ENCODE measurements at regions of chr7 and their contacts with region 1.

Region 1: DNA sequence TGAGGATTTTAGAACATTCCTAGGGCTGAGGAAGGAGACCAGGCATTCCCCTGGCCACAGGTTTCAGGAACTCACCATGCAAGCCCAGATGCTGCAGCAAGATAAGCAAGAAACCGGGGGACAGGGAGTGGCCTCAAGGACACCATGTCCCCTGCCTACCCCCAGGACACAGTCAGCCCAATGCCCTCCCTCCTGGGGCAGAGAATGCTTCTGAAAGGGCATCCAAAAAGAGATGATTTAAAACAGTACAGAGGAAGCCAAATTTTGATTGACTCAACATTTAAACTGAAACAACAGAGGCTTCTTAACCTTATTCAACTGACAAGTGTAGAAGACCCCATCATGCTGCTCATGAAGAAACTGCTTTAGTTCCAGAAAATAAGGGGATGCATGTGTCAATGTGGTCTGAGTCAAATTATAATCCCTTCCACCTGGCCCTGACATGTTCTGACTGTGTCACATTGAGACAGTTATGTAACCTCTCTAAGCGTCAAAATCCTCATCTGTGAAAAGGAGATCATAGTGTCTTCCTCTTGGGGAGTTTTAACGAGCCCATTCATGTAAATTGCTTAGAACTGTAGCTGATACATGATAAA is 60.0 kb downstream of the ICA1 start:
- DNase-seq: peak; percentile 32
- H3K4me3 ChIP-seq: no peak overlapping the region
- H3K27ac ChIP-seq: no peak overlapping the region
- H3K4me1 ChIP-seq: peaks cover 10% of the 10 kb centered on the region
- H3K27me3 ChIP-seq: no peaks in the 10 kb centered on the region
- CTCF ChIP-seq: no peak

Region 2: GRCh38 chr7:7554021-7554432 is 647.9 kb before region 1 on chr7:
- CTCF ChIA-PET with region 1: no interaction called
- dilution Hi-C with region 1: no loop called
- in situ Hi-C with region 1: no loop called
- intact Hi-C with region 1: no loop called
- DNase-seq: peak; percentile 8
- H3K4me3 ChIP-seq: no peak overlapping the region
- H3K27ac ChIP-seq: no peak overlapping the region
- H3K4me1 ChIP-seq: no peaks in the 10 kb centered on the region
- H3K27me3 ChIP-seq: no peaks in the 10 kb centered on the region
- CTCF ChIP-seq: no peak

Region 3: GRCh38 chr7:8149222-8149621 is 52.7 kb before region 1 on chr7:
- CTCF ChIA-PET with region 1: no interaction called
- dilution Hi-C with region 1: loop called (anchors 5 kb)
- in situ Hi-C with region 1: no loop called
- intact Hi-C with region 1: no loop called
- DNase-seq: no peak
- H3K4me3 ChIP-seq: no peak overlapping the region
- H3K27ac ChIP-seq: no peak overlapping the region
- H3K4me1 ChIP-seq: no peaks in the 10 kb centered on the region
- H3K27me3 ChIP-seq: no peaks in the 10 kb centered on the region
- CTCF ChIP-seq: no peak

Measured in mammary epithelial cell (primary cell).